Activated T-helper 2 cell treated with anti-CD3 and anti-CD28 coated beads, Interferon-gamma antibody, Interleukin-2, Interleukin-4, amounts not matched to agents 10 μg/mL and 5 μg/mL and 100 μg/mL, durations not matched to agents 14 hours and 24 hours and 36 hours (primary cell): ENCODE measurements at regions of chr12 and their contacts with region 1.

Region 1: GRCh38 chr12:11771356-11771755 is 121.9 kb downstream of the ETV6 start:
- DNase-seq: no peak
- H3K4me3 Mint-ChIP-seq: no peak overlapping the region
- H3K27ac Mint-ChIP-seq: peak overlapping the region; percentile 91
- H3K4me1 Mint-ChIP-seq: peaks cover 75% of the 10 kb centered on the region
- H3K27me3 Mint-ChIP-seq: no peaks in the 10 kb centered on the region

Region 2: DNA sequence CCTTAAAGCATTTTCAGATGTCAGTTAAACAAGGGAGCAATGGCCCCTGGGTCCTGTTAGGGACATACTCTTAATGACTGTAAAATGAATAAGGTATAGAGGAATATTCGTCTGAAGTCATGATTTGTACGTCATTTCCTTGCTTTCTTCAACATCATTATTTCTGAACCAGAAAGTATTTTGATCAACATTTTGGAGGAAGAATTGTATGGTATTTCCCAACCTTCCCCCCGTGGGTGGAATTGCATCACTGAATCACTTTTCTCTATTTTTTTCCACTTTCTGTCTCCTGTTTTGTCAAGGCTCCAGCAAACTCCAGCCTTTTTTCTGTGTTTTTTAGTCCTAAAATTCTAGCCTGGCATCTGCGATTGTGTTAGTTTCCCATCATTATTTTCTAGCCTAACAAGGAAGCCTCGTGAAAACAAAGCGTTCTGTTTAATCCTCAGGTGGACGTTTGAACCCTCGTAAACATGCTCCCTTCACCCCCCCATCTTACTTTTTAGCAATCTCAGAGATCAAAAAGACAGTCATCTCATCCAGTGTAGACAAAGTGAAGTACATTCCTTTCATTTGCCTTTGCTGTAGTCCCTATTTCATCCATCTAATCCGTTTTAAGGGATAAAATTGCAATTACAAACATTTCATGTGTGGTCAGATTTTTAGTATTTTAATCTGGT is 59.6 kb before region 1 on chr12:
- intact Hi-C with region 1: loop called (anchors 1 kb)
- DNase-seq: no peak
- H3K4me3 Mint-ChIP-seq: no peak overlapping the region
- H3K27ac Mint-ChIP-seq: no peak overlapping the region
- H3K4me1 Mint-ChIP-seq: peaks cover 42% of the 10 kb centered on the region
- H3K27me3 Mint-ChIP-seq: no peaks in the 10 kb centered on the region

Region 3: GRCh38 chr12:11812586-11813427 is 41.5 kb after region 1 on chr12:
- intact Hi-C with region 1: loop called (anchors 5 kb)
- DNase-seq: no peak
- H3K4me3 Mint-ChIP-seq: no peak overlapping the region
- H3K27ac Mint-ChIP-seq: peak overlapping the region; percentile 35
- H3K4me1 Mint-ChIP-seq: peaks cover 28% of the 10 kb centered on the region
- H3K27me3 Mint-ChIP-seq: no peaks in the 10 kb centered on the region

Region 4: DNA sequence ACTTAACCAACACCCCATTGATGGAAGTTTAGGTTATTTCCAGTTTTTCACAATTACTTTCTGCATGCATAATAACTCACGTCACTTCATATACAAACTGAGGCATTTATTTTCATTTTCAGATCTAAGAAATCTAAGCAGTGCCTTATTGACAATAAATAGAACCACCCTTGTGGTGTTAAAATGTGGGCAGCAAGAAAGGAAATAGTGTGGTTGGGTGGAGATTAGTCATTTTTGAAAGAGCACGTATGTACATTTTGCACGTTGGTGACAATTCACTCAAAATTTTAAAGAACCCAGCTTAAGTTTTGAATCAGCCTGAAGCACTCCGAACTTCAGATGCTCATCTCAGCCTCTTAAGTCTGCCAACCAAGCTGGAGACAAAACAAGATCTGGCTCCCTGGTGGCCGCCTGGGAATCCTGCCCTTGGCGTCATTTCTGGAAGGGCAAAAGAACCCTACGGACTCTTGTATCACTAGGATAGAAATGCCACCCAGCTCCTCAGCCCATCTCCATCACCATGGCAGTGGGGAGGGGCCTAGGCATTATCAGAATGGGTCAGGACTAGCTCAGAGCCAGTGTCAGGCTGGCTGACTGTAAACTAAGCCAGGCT is 209.9 kb after region 1 on chr12:
- intact Hi-C with region 1: loop called (anchors 1 kb)
- DNase-seq: peak; percentile 60
- H3K4me3 Mint-ChIP-seq: peak overlapping the region; percentile 33
- H3K27ac Mint-ChIP-seq: peak overlapping the region; percentile 98
- H3K4me1 Mint-ChIP-seq: peaks cover 63% of the 10 kb centered on the region
- H3K27me3 Mint-ChIP-seq: no peaks in the 10 kb centered on the region